Left colon (tissue), 2 donors: ENCODE measurements at regions of chr3 and their contacts with region 1.

Region 1: DNA sequence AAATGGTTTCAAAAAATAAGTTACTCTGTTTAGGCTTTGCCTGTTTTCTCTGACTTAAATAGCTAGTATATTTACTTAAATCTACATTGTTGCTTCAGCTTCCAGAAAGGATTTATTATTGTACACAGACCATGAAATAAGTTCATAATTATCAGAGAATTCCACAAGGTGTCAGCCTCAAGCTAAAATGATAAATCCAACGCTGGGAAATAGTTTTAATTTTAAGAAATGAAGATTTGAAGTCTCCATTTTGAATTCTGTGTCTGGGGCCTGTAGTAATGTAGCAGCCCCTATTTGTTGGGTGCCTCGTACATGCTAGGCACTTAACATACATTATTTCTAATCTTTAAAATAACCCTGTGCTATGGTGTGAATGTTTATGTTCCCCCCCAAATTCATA is 92.6 kb upstream of the KCNMB2 start:
- DNase-seq: no peak
- ATAC-seq: no peak

Region 2: GRCh38 chr3:178277605-178278004 is 166.0 kb before region 1 on chr3:
- intact Hi-C with region 1: no loop called
- DNase-seq: no peak
- ATAC-seq: peak; percentile 96

Region 3: GRCh38 chr3:178971614-178972013 is 528.0 kb after region 1 on chr3:
- intact Hi-C with region 1: loop called (anchors 5 to 10 kb)
- DNase-seq: no peak
- ATAC-seq: no peak